Calu3 (cell line): ENCODE measurements at regions of chr4 and their contacts with region 1.

Region 1: DNA sequence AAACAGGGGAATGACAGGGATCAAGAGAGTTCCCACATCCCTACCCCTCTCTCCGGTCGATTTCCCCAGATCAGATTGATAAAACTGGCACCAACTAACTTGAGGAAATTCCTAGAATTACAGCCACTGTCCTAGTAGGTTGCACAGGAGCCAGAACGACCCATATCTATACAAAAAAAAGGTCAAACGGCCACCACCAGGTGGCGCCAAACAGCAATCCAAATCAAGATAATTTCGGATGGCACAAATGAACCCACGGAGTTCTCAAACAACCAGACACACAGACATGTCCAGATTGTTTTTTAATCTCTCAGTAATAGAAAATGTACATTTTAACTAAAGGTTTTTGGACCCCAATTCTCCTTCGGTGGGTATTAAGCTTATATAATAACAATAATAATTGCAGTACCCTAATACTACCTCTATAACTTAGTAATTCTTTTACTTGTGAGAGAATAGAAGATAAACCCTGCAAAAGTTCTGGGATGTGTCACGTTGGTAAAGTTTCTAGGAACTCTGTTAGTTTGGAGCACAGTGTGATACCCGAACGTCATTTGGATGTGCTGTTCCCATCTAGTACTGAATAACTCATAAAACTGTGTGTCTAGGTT is 212.6 kb downstream of the SPOCK3 start:
- DNase-seq: peak; percentile 61
- H3K4me3 Mint-ChIP-seq: no peak overlapping the region
- H3K27ac Mint-ChIP-seq: no peak overlapping the region
- H3K4me1 Mint-ChIP-seq: peaks cover 16% of the 10 kb centered on the region
- H3K27me3 Mint-ChIP-seq: no peaks in the 10 kb centered on the region
- CTCF ChIP-seq: no peak

Region 2: DNA sequence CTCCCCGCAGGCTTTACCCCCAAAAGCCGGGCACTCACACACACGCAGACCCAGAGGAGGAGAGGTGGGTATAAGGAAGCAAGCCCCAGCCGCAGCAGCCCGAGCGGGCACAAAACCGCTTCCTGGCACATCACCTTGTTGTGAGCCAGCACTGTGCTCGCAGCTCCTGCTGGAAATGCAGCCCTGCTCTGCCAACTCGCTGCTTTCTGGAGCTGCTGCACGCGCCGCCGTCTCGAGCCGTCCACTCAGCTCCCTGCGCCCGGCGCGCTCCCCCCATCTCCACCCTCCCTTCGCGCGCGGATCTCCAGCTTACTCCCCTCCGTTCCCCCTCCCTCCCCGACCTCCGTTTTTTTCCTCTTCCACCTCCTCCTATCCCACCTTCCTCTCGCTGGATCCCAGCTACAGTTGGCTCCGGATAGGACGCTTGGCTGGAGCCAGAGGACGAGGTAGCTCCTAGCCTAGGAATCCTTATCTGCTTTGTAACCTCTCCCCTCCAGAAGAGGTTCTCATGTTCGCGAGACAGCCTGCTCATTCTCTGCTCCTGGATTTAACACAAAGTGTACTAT is 212.7 kb after region 1 on chr4 and contains the start of gene SPOCK3:
- CTCF ChIA-PET with region 1: no interaction called
- intact Hi-C with region 1: loop called (anchors 5 kb)
- DNase-seq: peak; percentile 24
- H3K4me3 Mint-ChIP-seq: peak within 1 kb of the TSS; percentile 93
- H3K27ac Mint-ChIP-seq: no peak within 1 kb of the TSS
- H3K4me1 Mint-ChIP-seq: no peaks in the 10 kb centered on the region
- H3K27me3 Mint-ChIP-seq: no peaks in the 10 kb centered on the region
- CTCF ChIP-seq: no peak
- total RNA-seq, gene SPOCK3: 0.31 and 0.51 TPM in 2 replicates

Region 3: GRCh38 chr4:167290678-167291077 is 269.0 kb after region 1 on chr4:
- CTCF ChIA-PET with region 1: no interaction called
- intact Hi-C with region 1: loop called (anchors 1 kb)
- DNase-seq: no peak
- H3K4me3 Mint-ChIP-seq: no peak overlapping the region
- H3K27ac Mint-ChIP-seq: no peak overlapping the region
- H3K4me1 Mint-ChIP-seq: no peaks in the 10 kb centered on the region
- H3K27me3 Mint-ChIP-seq: no peaks in the 10 kb centered on the region
- CTCF ChIP-seq: no peak

Region 4: DNA sequence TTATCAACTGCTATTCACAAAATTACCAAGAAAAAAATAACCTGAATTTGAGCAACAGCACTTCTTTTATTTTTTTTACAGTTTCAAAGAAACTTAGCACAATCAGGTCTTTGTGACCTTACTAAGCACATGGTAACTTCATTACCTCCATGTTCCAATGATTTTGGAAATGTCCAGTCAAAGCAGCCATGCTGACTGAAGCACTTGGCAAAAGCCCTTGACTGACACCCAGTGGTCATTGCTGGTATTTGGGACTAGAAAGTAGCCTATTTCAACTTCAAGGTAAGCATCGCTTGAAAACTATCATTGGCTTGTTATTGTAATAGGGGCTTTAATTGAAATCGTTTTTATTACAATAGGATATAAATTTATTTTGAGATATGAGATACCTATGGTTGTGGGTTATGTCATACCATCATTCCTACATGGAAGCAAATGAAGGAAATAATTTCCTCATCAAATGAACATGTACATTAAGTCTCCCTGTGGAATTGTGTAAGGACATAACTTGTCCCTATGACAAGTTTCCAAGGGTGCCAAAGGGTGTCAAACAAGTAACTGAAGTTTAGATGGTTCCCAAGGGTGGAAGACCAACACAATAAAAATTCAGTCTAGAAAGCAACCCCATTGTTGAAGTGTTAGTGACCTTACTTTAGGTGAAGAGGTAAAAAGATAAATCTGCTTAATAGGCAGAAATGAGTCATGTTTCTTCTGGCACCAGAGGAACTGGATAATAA is 1055.5 kb after region 1 on chr4:
- CTCF ChIA-PET with region 1: no interaction called
- intact Hi-C with region 1: loop called (anchors 2 kb)
- DNase-seq: peak; percentile 74
- H3K4me3 Mint-ChIP-seq: no peak overlapping the region
- H3K27ac Mint-ChIP-seq: no peak overlapping the region
- H3K4me1 Mint-ChIP-seq: peaks cover 8% of the 10 kb centered on the region
- H3K27me3 Mint-ChIP-seq: no peaks in the 10 kb centered on the region
- CTCF ChIP-seq: peak; percentile 43